Activated T-helper 1 cell treated with anti-CD3 and anti-CD28 coated beads, Interleukin-12 subunit alpha, Interleukin-12 subunit beta, Interleukin-2, Interleukin-4 antibody, amounts not matched to agents 30 ng/mL and 10 ng/mL and 1 ng/mL, durations not matched to agents 14 hours and 24 hours and 36 hours (primary cell): ENCODE measurements at regions of chr6 and their contacts with region 1.

Region 1: GRCh38 chr6:107957909-107958688 is at the start of gene SEC63:
- DNase-seq: peak; percentile 97
- H3K4me3 Mint-ChIP-seq: peak within 1 kb of the TSS; percentile 100
- H3K27ac Mint-ChIP-seq: peak within 1 kb of the TSS; percentile 99
- H3K4me1 Mint-ChIP-seq: peaks cover 14% of the 10 kb centered on the region
- H3K27me3 Mint-ChIP-seq: peaks cover 5% of the 10 kb centered on the region
- total RNA-seq, gene SEC63: 87.1 and 90.7 TPM in 2 replicates

Region 2: DNA sequence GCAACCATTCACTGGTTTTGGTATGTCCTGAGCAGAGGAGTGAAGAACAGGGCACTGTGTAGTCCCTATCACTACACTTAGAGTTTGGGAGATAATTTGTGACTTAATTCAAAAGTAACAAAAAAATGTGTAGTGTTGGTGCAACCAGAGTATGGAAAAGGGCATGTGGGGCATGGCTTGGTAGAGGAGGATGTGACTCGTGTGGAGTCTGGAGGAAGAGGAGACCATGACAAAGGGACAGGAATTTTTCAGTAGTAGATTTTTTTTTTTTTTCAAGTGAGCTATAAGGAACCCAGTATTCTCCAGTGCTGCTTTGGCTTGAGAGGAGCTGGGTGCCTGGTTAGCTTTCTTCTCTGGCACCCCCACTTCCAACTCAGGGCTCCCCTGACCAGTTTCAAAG is 925.0 kb before region 1 on chr6:
- intact Hi-C with region 1: loop called (anchors 1 kb)
- DNase-seq: no peak
- H3K4me3 Mint-ChIP-seq: no peak overlapping the region
- H3K27ac Mint-ChIP-seq: peak overlapping the region; percentile 25
- H3K4me1 Mint-ChIP-seq: peaks cover 20% of the 10 kb centered on the region
- H3K27me3 Mint-ChIP-seq: no peaks in the 10 kb centered on the region

Region 3: DNA sequence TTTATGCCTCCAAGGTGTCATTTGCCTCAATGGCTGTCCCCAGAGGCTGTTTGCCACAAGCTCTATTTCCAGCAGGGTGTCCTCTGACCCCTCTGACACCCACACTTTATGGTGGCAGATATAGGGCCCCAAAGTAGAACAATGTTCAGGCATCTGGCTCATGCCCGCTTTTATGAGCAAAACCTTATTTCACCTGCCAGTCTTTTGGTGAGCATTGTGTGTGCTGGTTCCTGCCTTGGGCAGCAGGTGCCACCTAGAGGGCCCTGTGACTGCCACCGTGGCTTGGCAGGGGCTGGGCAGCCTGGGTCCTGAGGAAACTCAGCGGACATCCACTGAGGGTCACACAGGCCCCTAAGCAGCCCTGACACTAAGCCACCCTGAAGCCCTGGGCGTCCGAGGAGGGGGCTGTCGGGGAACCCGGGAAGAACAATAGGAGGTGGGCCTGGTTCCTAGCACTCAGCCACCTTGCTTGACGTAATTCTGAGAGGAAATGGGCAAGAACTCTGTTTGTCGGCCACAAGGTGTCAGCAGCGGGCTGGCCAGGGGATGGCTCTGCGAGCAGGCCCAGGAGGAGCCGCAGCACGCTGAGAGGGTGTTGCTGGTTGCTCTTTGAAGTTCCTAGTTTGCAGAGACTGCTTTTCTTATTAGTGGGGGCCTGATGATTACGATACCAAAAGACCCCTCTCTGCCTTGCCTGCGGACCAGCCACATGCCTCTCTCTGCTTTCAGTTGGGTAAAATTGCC is 282.9 kb before region 1 on chr6:
- intact Hi-C with region 1: loop called (anchors 5 kb)
- DNase-seq: peak; percentile 72
- H3K4me3 Mint-ChIP-seq: no peak overlapping the region
- H3K27ac Mint-ChIP-seq: no peak overlapping the region
- H3K4me1 Mint-ChIP-seq: peaks cover 25% of the 10 kb centered on the region
- H3K27me3 Mint-ChIP-seq: peaks cover 14% of the 10 kb centered on the region

Region 4: DNA sequence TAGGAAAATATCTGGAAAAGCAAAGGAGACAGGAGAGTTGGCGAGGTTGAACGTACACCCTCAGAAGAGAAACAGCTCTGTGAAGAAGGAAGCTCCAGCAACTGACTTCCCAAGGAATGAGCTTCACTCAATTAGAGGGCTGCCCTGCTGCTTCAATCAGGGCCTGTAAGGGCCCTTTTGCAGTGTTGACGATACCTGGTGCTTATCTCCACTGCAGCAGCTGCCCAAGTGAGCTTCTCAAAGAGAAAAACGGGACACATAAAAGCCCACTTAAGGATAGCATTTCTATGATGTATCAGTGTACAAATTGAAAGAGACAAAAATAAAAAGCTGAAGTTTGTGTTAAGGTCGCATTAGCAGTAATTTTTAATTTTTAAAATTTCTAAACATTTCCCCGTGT is 16.5 kb before region 1 on chr6:
- intact Hi-C with region 1: loop called (anchors 2 kb)
- DNase-seq: no peak
- H3K4me3 Mint-ChIP-seq: no peak overlapping the region
- H3K27ac Mint-ChIP-seq: no peak overlapping the region
- H3K4me1 Mint-ChIP-seq: peaks cover 12% of the 10 kb centered on the region
- H3K27me3 Mint-ChIP-seq: no peaks in the 10 kb centered on the region

Region 5: DNA sequence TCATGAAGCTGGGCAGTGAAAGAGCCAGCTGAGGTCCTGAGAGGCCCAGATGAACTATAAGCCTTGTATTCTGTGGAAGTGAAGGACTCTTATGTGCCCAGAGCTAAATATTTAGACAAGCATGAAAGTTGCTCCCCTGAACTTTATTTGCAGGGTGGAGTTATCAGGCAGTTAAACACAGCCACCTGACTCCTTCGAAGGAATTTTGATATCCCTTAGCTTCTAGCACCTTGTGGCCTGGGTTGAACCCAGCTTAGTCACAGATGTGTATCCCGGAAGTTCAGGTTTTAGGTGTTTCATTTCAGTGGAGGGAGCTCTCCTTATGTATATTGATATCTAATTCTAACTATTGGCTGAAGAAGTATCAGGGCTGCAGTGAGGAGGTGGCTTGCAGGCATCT is 228.1 kb after region 1 on chr6:
- intact Hi-C with region 1: no loop called
- DNase-seq: no peak
- H3K4me3 Mint-ChIP-seq: no peak overlapping the region
- H3K27ac Mint-ChIP-seq: no peak overlapping the region
- H3K4me1 Mint-ChIP-seq: no peaks in the 10 kb centered on the region
- H3K27me3 Mint-ChIP-seq: peaks cover 29% of the 10 kb centered on the region

Region 6: GRCh38 chr6:108294727-108295625 is 336.9 kb after region 1 on chr6 and contains the start of gene AFG1L:
- intact Hi-C with region 1: loop called (anchors 1 kb)
- DNase-seq: peak; percentile 82
- H3K4me3 Mint-ChIP-seq: peak within 1 kb of the TSS; percentile 100
- H3K27ac Mint-ChIP-seq: peak within 1 kb of the TSS; percentile 100
- H3K4me1 Mint-ChIP-seq: peaks cover 26% of the 10 kb centered on the region
- H3K27me3 Mint-ChIP-seq: peaks cover 2% of the 10 kb centered on the region
- total RNA-seq, gene AFG1L: 4.3 and 6.0 TPM in 2 replicates